Mammary epithelial cell (primary cell): ENCODE measurements at regions of chr17 and their contacts with region 1.

Region 1: GRCh38 chr17:28661635-28662537 is at the starts of genes SDF2 and SUPT6H:
- DNase-seq: peak; percentile 85
- H3K4me3 ChIP-seq: peak within 1 kb of the TSS; percentile 96 to 99 (median 96)
- H3K27ac ChIP-seq: peak within 1 kb of the TSS; percentile 95
- H3K4me1 ChIP-seq: peaks cover 16% of the 10 kb centered on the region
- H3K27me3 ChIP-seq: no peaks in the 10 kb centered on the region
- CTCF ChIP-seq: no peak
- total RNA-seq, gene SDF2: 37.7 to 37.8 TPM
- total RNA-seq, gene SUPT6H: 51.7 to 78.9 TPM

Region 2: GRCh38 chr17:28204751-28205150 is 457.1 kb before region 1 on chr17:
- CTCF ChIA-PET with region 1: no interaction called
- dilution Hi-C with region 1: no loop called
- in situ Hi-C with region 1: no loop called
- intact Hi-C with region 1: no loop called
- DNase-seq: peak; percentile 61
- H3K4me3 ChIP-seq: no peak overlapping the region
- H3K27ac ChIP-seq: no peak overlapping the region
- H3K4me1 ChIP-seq: peaks cover 9% of the 10 kb centered on the region
- H3K27me3 ChIP-seq: no peaks in the 10 kb centered on the region
- CTCF ChIP-seq: no peak

Region 3: GRCh38 chr17:28675980-28676379 is 14.1 kb after region 1 on chr17:
- CTCF ChIA-PET with region 1: no interaction called
- dilution Hi-C with region 1: no loop called
- in situ Hi-C with region 1: no loop called
- intact Hi-C with region 1: loop called (anchors 1 kb)
- DNase-seq: peak; percentile 16
- H3K4me3 ChIP-seq: no peak overlapping the region
- H3K27ac ChIP-seq: no peak overlapping the region
- H3K4me1 ChIP-seq: no peaks in the 10 kb centered on the region
- H3K27me3 ChIP-seq: no peaks in the 10 kb centered on the region
- CTCF ChIP-seq: peak; percentile 45 to 66

Region 4: DNA sequence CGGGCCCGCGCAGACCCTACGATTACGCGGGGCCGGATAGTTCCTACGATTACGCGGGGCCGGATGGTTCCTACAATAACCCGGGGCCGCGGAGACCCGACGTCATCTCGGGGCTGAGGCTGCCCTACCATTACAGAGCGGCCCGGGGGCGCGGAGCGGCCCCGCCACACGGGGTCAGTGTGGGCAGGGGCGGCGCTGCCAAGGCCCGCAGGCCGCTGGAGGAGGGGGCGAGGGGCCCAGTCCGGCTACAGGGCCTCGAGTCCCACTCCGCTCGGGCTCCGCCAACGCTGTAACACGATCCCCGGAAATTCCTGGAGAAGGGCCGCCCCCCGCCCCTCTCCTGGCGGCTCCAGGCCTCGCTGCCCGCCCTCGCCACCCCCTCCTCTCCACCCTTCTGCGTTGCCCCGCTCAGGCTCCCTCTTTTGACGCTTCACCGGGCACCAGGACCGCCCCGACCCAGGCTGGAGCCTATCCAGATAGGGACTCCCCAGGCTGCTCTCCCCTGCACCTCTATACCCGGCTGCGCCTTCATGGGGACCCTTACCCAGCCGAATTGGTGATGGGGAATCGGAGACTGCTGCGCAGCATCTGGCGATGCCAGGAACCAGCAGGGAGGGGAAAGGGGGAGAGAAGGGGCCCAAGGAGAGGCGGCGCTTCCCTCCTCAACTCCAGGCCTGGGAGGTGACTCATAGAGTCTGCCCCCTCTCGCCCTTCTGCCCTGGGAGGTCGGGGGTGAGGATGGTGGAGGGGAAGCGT is 55.9 kb after region 1 on chr17 and contains the start of gene RAB34:
- CTCF ChIA-PET with region 1: no interaction called
- dilution Hi-C with region 1: no loop called
- in situ Hi-C with region 1: no loop called
- intact Hi-C with region 1: loop called (anchors 5 kb)
- DNase-seq: peak; percentile 73
- H3K4me3 ChIP-seq: peak within 1 kb of the TSS; percentile 67 to 85 (median 69)
- H3K27ac ChIP-seq: peak within 1 kb of the TSS; percentile 93
- H3K4me1 ChIP-seq: peaks cover 42% of the 10 kb centered on the region
- H3K27me3 ChIP-seq: no peaks in the 10 kb centered on the region
- CTCF ChIP-seq: peak in 1 of 2 donors; percentile 41
- total RNA-seq, gene RAB34: 68.2 to 83.4 TPM